ENCODE measurements at regions of chr3 and their contacts with region 1.

Region 1: DNA sequence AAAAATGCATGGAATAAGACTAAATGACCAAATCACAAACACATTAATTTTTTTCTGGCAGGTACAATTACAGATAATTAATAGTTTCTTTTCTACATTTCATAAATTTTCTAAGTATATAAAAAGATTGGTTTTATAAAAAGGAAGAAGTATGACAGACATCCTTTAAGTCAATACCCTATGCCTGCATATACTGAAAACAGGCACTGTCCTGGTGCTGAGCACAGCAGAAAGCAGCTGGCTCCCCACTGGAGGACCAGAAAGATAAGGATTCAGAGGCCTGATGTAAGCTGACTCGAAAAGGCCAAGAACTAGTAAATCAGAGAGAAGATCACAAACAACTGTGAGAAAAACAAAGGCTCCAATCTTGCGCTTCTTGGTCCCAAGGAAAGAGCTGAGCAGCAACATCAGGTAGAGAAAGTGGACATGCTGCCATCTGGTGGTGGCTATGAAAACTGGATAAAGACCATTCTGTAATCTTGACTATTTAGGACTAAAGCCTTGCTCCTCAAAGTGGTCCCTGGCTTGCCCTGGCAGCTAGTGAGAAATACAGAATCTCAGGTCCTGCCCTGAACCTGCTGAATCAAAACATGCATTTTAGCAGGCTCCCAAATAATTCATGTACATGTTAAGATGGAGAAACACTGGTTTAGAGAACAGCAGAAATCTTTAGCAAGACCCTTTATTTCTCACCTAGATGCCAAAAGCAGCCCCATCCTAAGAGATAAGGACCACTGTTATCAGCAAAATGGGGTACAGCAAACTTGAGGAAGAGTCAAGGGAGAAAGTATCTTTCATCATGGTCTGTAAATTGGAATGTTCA is 76.0 kb downstream of the TRANK1 start:
- DNase-seq: peak; percentile 77
- ATAC-seq: peak; percentile 73
- H3K4me3 ChIP-seq: no peak overlapping the region
- H3K4me3 Mint-ChIP-seq: no peak overlapping the region
- H3K27ac ChIP-seq: no peak overlapping the region
- H3K27ac Mint-ChIP-seq: peak overlapping the region; percentile 0
- H3K4me1 ChIP-seq: peaks cover 5 to 13% of the 10 kb centered on the region in 2 donors
- H3K4me1 Mint-ChIP-seq: peaks cover 22% of the 10 kb centered on the region
- H3K27me3 ChIP-seq: no peaks in the 10 kb centered on the region
- H3K27me3 Mint-ChIP-seq: no peaks in the 10 kb centered on the region
- CTCF ChIP-seq: peak; percentile 90

Region 2: GRCh38 chr3:36804295-36805055 is 64.3 kb before region 1 on chr3:
- CTCF ChIA-PET with region 1: no interaction called
- POLR2A ChIA-PET with region 1: no interaction called
- intact Hi-C with region 1: no loop called
- DNase-seq: no peak
- ATAC-seq: no peak
- H3K4me3 ChIP-seq: no peak overlapping the region
- H3K4me3 Mint-ChIP-seq: no peak overlapping the region
- H3K27ac ChIP-seq: no peak overlapping the region
- H3K27ac Mint-ChIP-seq: no peak overlapping the region
- H3K4me1 ChIP-seq: no peaks in the 10 kb centered on the region
- H3K4me1 Mint-ChIP-seq: no peaks in the 10 kb centered on the region
- H3K27me3 ChIP-seq: peaks cover 0 to 3% (median 0%) of the 10 kb centered on the region in 4 experiments
- H3K27me3 Mint-ChIP-seq: peaks cover 46% of the 10 kb centered on the region
- CTCF ChIP-seq: no peak

Region 3: DNA sequence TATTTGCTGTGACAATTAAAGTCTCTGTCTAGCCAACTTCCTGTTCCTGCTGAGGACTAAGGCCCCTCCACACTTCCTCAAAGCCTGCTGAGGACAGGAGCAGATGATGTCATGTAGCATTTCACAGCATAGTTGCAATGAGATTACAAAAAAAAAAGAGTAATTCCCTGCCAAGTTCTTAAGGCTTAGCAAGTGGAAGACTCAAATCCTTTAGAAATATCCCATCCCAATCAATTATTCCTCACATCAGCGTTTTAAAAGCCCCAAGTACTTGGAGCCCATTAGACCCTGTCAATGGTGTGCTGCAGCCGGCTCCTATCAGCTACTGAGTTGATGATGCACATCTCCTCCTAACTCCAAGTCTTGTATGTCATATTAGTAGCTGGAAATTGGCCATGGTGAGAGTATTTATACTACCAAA is 24.3 kb after region 1 on chr3:
- CTCF ChIA-PET with region 1: interaction called, 21 read pairs
- POLR2A ChIA-PET with region 1: no interaction called
- intact Hi-C with region 1: no loop called
- DNase-seq: peak; percentile 83
- ATAC-seq: peak; percentile 50
- H3K4me3 ChIP-seq: peak overlapping the region in 1 of 5 experiments; percentile 4
- H3K4me3 Mint-ChIP-seq: peak overlapping the region; percentile 70
- H3K27ac ChIP-seq: peak overlapping the region; percentile 84 to 97
- H3K27ac Mint-ChIP-seq: peak overlapping the region; percentile 97
- H3K4me1 ChIP-seq: peaks cover 78% of the 10 kb centered on the region in 2 donors
- H3K4me1 Mint-ChIP-seq: peaks cover 84% of the 10 kb centered on the region
- H3K27me3 ChIP-seq: no peaks in the 10 kb centered on the region
- H3K27me3 Mint-ChIP-seq: no peaks in the 10 kb centered on the region
- CTCF ChIP-seq: no peak

Region 4: GRCh38 chr3:36911990-36912804 is 43.4 kb after region 1 on chr3:
- CTCF ChIA-PET with region 1: interaction called, 17 read pairs
- POLR2A ChIA-PET with region 1: no interaction called
- intact Hi-C with region 1: no loop called
- DNase-seq: peak; percentile 88
- ATAC-seq: peak; percentile 83
- H3K4me3 ChIP-seq: peak overlapping the region in 4 of 5 experiments; percentile 9 to 35 (median 18)
- H3K4me3 Mint-ChIP-seq: peak overlapping the region; percentile 35
- H3K27ac ChIP-seq: peak overlapping the region; percentile 90 to 91
- H3K27ac Mint-ChIP-seq: peak overlapping the region; percentile 84
- H3K4me1 ChIP-seq: peaks cover 35 to 51% of the 10 kb centered on the region in 2 donors
- H3K4me1 Mint-ChIP-seq: peaks cover 53% of the 10 kb centered on the region
- H3K27me3 ChIP-seq: no peaks in the 10 kb centered on the region
- H3K27me3 Mint-ChIP-seq: no peaks in the 10 kb centered on the region
- CTCF ChIP-seq: no peak

Region 5: GRCh38 chr3:36944012-36944640 is 75.3 kb after region 1 on chr3:
- CTCF ChIA-PET with region 1: interaction called, 22 read pairs
- POLR2A ChIA-PET with region 1: no interaction called
- intact Hi-C with region 1: no loop called
- DNase-seq: no peak
- ATAC-seq: peak; percentile 39
- H3K4me3 ChIP-seq: peak overlapping the region; percentile 22 to 79 (median 76)
- H3K4me3 Mint-ChIP-seq: peak overlapping the region; percentile 90
- H3K27ac ChIP-seq: peak overlapping the region in 1 of 2 donors; percentile 76
- H3K27ac Mint-ChIP-seq: peak overlapping the region; percentile 78
- H3K4me1 ChIP-seq: peaks cover 6 to 14% of the 10 kb centered on the region in 2 donors
- H3K4me1 Mint-ChIP-seq: peaks cover 16% of the 10 kb centered on the region
- H3K27me3 ChIP-seq: no peaks in the 10 kb centered on the region
- H3K27me3 Mint-ChIP-seq: no peaks in the 10 kb centered on the region
- CTCF ChIP-seq: no peak

Measured in B cell (primary cell).